ENCODE measurements at regions of chr5 and their contacts with region 1.

Region 1: GRCh38 chr5:32489791-32490582 is 45.4 kb upstream of the ZFR start:
- DNase-seq: peak; percentile 82
- H3K4me3 Mint-ChIP-seq: no peak overlapping the region
- H3K27ac Mint-ChIP-seq: no peak overlapping the region
- H3K4me1 Mint-ChIP-seq: no peaks in the 10 kb centered on the region
- H3K27me3 Mint-ChIP-seq: no peaks in the 10 kb centered on the region
- CTCF ChIP-seq: peak; percentile 73

Region 2: DNA sequence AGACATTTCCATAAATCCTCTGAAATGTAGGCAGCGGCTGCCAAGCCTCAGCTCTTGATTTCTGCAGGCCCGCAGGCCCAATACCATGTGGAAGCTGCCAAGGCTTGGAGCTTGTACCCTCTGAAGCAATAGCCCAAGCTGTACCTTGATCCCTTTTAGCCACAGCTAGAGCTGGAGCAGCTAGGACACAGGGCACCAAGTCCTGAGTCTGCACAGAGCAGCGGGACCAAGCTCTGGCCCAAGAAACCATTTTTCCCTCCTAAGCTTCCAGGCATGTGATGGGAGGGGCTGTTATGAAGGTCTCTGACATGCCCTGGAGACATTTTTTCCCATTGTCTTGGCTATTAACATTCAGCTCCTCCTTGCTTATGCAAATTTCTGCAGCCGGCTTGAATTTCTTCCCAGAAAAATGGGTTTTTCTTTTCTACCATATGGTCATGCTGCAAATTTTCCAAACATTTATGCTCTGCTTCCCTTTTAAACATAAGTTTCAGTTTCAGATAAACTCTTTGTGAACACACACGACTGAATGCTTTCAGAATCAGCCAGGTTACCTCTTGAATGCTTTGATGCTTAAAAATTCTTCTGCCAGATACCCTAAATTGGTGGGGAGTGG is 31.0 kb before region 1 on chr5:
- CTCF ChIA-PET with region 1: interaction called, 16 read pairs
- POLR2A ChIA-PET with region 1: interaction called, 3 read pairs
- intact Hi-C with region 1: no loop called
- DNase-seq: no peak
- H3K4me3 Mint-ChIP-seq: no peak overlapping the region
- H3K27ac Mint-ChIP-seq: no peak overlapping the region
- H3K4me1 Mint-ChIP-seq: peaks cover 5% of the 10 kb centered on the region
- H3K27me3 Mint-ChIP-seq: peaks cover 11% of the 10 kb centered on the region
- CTCF ChIP-seq: no peak

Region 3: GRCh38 chr5:32504989-32505596 is 15.1 kb after region 1 on chr5:
- CTCF ChIA-PET with region 1: interaction called, 42 read pairs
- POLR2A ChIA-PET with region 1: interaction called, 3 read pairs
- intact Hi-C with region 1: no loop called
- DNase-seq: peak; percentile 60
- H3K4me3 Mint-ChIP-seq: no peak overlapping the region
- H3K27ac Mint-ChIP-seq: no peak overlapping the region
- H3K4me1 Mint-ChIP-seq: peaks cover 6% of the 10 kb centered on the region
- H3K27me3 Mint-ChIP-seq: no peaks in the 10 kb centered on the region
- CTCF ChIP-seq: no peak

Region 4: GRCh38 chr5:32585446-32586275 is 95.7 kb after region 1 on chr5 and contains the start of gene SUB1:
- CTCF ChIA-PET with region 1: interaction called, 169 read pairs
- POLR2A ChIA-PET with region 1: interaction called, 23 read pairs
- intact Hi-C with region 1: loop called (anchors 1 kb)
- DNase-seq: peak; percentile 92
- H3K4me3 Mint-ChIP-seq: peak within 1 kb of the TSS; percentile 95
- H3K27ac Mint-ChIP-seq: peak within 1 kb of the TSS; percentile 94
- H3K4me1 Mint-ChIP-seq: peaks cover 21% of the 10 kb centered on the region
- H3K27me3 Mint-ChIP-seq: no peaks in the 10 kb centered on the region
- CTCF ChIP-seq: no peak
- total RNA-seq, gene SUB1: 269 and 302 TPM in 2 replicates

Region 5: DNA sequence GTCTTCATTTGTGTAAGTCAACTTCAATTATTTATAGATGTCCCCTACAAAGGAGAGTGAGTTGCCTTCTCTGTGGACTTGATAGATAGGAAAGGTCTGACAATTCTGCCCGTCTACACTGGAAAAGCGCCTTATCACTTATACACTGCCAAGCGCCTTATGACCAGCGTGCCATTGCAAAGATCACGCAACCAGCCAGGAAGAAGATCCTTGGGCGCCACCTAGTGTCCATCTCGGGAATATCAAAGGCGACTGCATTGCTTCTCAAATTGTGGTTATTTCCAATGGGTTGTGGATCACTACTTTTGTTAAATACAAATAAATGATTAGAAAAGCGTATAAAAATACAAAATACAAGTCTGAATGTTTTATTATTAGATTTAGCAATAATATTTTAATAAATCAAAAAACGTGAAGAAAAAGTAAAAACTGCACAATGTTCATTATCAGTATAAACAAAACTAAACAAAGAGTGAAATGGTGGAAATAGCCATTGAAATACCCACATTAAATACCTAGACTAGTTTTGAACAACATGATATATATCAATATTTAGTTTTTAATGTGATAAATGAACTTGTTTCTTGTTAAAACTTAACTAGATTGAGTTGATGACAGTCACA is 123.2 kb after region 1 on chr5:
- CTCF ChIA-PET with region 1: interaction called, 53 read pairs
- POLR2A ChIA-PET with region 1: interaction called, 3 read pairs
- intact Hi-C with region 1: loop called (anchors 1 kb)
- DNase-seq: peak; percentile 84
- H3K4me3 Mint-ChIP-seq: no peak overlapping the region
- H3K27ac Mint-ChIP-seq: no peak overlapping the region
- H3K4me1 Mint-ChIP-seq: peaks cover 9% of the 10 kb centered on the region
- H3K27me3 Mint-ChIP-seq: no peaks in the 10 kb centered on the region
- CTCF ChIP-seq: peak; percentile 84

Region 6: DNA sequence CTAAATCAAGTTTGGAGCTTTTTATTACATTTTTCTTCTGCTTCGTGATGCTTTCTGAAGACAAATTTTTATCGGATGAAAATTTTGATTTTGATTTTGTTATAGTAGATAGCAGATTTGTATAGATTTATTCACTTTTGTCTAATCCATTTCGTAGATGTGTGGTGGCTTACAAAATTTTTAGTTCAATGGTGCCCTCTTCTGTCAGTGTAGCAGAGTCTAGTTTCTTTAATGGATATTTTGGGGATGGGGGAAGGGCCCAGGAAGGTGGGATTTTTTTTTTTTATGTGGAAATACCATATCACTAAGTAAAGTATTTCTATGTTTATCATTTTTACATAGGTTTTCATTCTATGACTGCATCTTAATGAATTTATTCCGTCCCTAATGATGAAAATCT is 690.9 kb after region 1 on chr5:
- CTCF ChIA-PET with region 1: interaction called, 6 read pairs
- POLR2A ChIA-PET with region 1: no interaction called
- intact Hi-C with region 1: loop called (anchors 2 kb)
- DNase-seq: peak; percentile 56
- H3K4me3 Mint-ChIP-seq: no peak overlapping the region
- H3K27ac Mint-ChIP-seq: peak overlapping the region; percentile 31
- H3K4me1 Mint-ChIP-seq: no peaks in the 10 kb centered on the region
- H3K27me3 Mint-ChIP-seq: no peaks in the 10 kb centered on the region
- CTCF ChIP-seq: peak; percentile 68

Measured in MCF 10A (cell line).